ENCODE measurements at regions of chr3 and their contacts with region 1.

Region 1: GRCh38 chr3:99714146-99714545 is 75.8 kb downstream of the COL8A1 start:
- DNase-seq: no peak
- H3K4me3 ChIP-seq: no peak overlapping the region
- H3K27ac ChIP-seq: peak overlapping the region; percentile 52 to 60
- H3K4me1 ChIP-seq: peaks cover 0 to 35% of the 10 kb centered on the region in 2 donors
- H3K27me3 ChIP-seq: no peaks in the 10 kb centered on the region
- CTCF ChIP-seq: no peak

Region 2: GRCh38 chr3:99659032-99659431 is 55.1 kb before region 1 on chr3:
- intact Hi-C with region 1: loop called (anchors 5 kb)
- DNase-seq: peak in 1 of 2 donors; percentile 75
- H3K4me3 ChIP-seq: no peak overlapping the region
- H3K27ac ChIP-seq: peak overlapping the region; percentile 74 to 79
- H3K4me1 ChIP-seq: peaks cover 7 to 29% of the 10 kb centered on the region in 2 donors
- H3K27me3 ChIP-seq: no peaks in the 10 kb centered on the region
- CTCF ChIP-seq: no peak